GM10248 (cell line): ENCODE measurements at regions of chr18 and their contacts with region 1.

Region 1: DNA sequence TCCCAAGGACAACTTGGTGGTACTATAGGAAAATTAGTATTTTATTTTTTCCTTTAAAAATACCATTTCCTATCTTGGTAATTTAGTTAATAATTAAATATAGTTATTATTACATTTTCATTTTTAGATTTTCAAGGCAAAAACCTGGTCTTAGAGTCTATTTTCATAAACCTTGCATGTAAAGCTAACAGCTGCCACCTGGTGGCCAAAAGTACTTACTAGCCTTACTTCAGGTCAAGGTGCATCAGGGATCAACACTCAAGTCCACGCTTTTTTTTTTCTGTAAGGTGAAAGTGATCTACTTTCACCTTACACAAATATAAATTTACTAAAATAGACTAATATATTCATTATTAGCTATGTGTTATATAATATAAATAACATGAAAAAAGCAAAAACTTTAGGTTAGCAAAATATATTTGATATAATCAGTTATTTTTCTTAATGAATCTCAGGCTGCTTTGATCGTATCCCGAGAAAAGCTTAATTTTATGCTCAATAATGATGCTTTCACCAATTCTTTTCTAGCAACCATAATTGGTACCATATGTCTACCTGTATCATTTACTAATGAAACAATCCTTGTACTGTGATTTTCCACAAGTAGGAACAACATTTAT is 62.5 kb downstream of the RELCH start:
- DNase-seq: peak; percentile 48
- CTCF ChIP-seq: peak; percentile 73

Region 2: DNA sequence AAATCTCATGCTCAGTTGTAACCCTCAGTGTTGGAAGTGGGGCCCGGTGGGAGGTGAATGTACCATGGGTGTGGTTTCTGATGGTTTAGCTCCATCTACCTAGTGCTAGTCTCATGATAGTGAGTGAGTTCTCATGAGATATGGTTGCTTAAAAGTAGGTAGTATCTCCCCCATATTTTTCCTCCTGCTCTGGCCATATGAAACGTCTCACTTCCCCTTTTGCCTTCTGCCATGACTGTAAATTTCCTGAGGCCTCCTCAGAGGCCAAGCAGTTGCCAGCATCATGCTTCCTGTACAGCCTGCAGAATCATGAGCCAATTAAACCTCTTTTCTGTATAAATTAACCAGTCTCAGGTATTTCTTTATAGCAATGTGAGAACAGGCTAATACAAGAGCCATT is 293.9 kb before region 1 on chr18:
- CTCF ChIA-PET with region 1: no interaction called
- POLR2A ChIA-PET with region 1: no interaction called
- DNase-seq: no peak
- CTCF ChIP-seq: no peak

Region 3: GRCh38 chr18:62165583-62165982 is 84.0 kb before region 1 on chr18:
- CTCF ChIA-PET with region 1: interaction called, 10 read pairs
- POLR2A ChIA-PET with region 1: interaction called, 4 read pairs
- DNase-seq: no peak
- CTCF ChIP-seq: no peak

Region 4: DNA sequence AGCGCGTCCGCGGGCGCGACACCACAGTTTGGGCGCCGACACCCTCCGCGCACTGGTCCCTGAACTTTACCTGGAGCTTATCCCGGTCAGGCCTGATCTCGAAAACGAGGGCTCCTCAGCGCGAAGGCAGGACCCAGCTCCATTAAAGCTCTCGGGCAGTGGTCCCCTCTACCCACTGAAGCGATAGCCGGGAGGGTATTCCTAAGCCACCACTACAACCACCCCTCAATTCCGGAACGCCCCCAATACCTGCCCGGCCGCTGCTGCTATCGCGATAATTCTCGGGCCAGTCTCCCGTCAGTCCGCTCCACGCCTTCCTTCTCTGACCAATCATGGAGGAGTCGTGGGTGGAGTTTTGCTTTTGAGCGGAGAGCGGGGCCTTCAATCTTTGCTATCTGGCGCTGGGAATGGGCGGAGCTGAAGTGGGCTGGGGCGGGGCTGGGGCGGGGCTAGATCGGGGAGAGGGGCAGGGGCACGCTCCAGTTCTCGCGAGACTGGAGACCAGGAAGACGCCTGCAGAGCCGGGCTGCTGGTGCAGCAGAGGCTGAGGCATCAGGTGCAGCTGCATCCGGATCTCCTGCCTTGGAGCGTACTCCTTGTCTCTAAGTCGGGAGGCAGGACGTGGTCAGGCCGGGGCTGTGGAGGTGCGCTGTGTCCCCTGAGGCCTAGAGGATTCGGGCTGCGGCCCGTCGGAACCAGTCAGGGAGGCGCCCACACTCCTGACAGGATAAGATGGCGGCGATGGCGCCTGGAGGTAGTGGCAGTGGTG is 62.6 kb before region 1 on chr18 and contains the starts of genes PIGN and RELCH:
- CTCF ChIA-PET with region 1: interaction called, 64 read pairs
- POLR2A ChIA-PET with region 1: no interaction called
- DNase-seq: peak; percentile 97
- CTCF ChIP-seq: no peak

Region 5: DNA sequence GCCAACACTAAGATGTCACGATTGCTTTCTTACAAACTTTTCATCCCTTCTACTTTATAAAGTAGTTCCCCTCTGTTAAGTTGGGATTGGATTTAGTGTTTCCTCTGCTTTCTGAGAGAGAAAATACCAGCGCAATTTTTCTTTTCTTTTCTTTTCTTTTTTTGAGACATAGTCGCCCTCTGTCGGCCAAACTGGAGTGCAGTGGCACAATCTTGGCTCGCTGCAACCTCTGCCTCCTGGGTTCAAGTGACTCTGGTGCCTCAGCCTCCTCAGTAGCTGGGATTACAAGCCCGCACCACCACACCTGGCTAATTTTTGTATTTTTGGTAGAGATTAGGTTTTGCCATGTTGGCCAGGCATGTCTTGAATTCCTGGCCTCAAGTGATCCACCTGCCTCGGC is 53.5 kb before region 1 on chr18:
- CTCF ChIA-PET with region 1: interaction called, 14 read pairs
- POLR2A ChIA-PET with region 1: interaction called, 4 read pairs
- DNase-seq: no peak
- CTCF ChIP-seq: no peak

Region 6: DNA sequence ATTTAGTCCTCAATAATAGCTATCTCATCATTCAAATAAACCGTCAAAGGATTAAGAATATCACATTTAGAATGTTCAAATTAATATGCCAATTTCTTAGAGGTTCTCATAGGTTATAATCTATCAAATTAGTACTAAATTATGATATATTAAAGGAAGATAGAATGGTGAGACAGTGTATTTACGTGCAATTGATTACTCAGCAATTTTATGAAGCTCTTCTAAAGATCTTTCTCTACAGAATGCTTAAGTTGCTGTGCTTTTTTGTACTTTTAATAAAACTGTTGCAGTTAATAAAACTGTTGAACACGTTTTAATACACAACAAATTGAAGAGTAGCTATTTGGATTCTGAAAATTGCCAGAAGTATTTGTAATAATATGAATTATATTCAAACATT is 23.5 kb before region 1 on chr18:
- CTCF ChIA-PET with region 1: interaction called, 11 read pairs
- POLR2A ChIA-PET with region 1: no interaction called
- DNase-seq: no peak
- CTCF ChIP-seq: no peak

Region 7: DNA sequence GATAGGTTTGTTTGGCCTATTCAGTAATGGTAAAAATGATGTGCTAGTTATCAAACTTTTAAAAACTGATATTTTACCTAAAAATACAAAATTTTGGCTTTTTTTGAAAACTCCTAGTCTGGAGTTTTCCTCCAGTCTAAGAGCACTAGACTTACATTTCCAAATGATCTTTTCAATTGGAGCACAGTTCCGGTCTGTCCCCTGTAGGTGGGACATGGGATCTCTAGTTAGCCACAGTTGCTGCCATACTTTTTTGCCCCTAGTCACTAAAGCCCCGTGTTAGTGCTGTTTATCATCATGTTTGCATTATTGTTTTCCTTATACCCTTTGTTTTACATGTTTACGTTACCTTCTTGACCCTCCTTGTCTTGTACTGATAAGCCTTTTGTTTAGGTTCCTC is 10.1 kb before region 1 on chr18:
- CTCF ChIA-PET with region 1: interaction called, 23 read pairs
- POLR2A ChIA-PET with region 1: no interaction called
- DNase-seq: no peak
- CTCF ChIP-seq: no peak

Region 8: GRCh38 chr18:62264984-62265383 is 15.4 kb after region 1 on chr18:
- CTCF ChIA-PET with region 1: interaction called, 25 read pairs
- POLR2A ChIA-PET with region 1: no interaction called
- DNase-seq: no peak
- CTCF ChIP-seq: no peak

Region 9: DNA sequence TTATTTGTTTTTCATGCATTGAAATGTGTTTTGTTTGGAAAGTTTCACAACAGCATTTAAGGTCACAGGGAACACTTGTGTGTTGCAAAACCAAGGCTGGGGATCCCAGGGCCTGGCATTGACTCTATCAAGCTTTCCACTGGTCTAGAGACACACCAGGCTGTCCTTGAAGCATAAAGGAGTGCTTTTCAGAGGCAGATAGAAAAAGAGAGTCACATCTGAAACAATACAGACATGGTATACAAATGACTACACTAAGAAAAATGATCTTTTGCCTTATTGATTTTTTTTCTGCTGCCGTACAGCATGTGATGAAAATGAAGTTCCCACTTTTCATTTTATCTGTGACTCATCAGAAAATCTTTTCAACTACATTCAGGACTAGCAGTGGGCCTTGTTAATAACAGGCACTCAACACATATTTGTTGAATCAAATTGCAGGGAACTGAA is 211.3 kb after region 1 on chr18:
- CTCF ChIA-PET with region 1: no interaction called
- POLR2A ChIA-PET with region 1: no interaction called
- DNase-seq: no peak
- CTCF ChIP-seq: no peak

Region 10: GRCh38 chr18:62497190-62497772 is 247.7 kb after region 1 on chr18:
- CTCF ChIA-PET with region 1: no interaction called
- POLR2A ChIA-PET with region 1: no interaction called
- DNase-seq: no peak
- CTCF ChIP-seq: no peak